HEK293T (cell line): ENCODE measurements at regions of chr14 and their contacts with region 1.

Region 1: GRCh38 chr14:64764641-64765520 is 60.7 kb downstream of the PLEKHG3 start:
- DNase-seq: peak; percentile 85

Region 2: DNA sequence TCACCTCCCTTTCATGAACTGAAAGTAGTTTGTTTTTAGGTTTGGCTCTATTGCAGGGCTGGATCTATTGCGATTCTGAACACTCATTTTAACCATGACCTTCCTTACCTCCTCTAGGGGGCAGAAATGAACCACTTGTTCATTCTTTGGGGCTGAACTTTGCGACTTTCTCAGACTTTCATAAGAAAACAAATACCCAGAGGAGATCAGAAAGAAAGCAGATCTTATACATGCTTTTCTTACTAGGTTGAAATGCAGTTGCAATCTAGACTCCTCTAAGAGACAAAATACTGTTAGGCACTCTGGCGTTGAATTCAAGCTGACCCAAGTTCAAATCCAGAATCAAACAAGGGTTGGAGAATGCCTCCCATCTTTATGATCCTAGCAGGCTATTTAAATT is 93.3 kb before region 1 on chr14:
- CTCF ChIA-PET with region 1: interaction called, 13 read pairs
- POLR2A ChIA-PET with region 1: interaction called, 4 read pairs
- DNase-seq: peak; percentile 61